K562 (cell line): ENCODE measurements at regions of chr20 and their contacts with region 1.

Region 1: DNA sequence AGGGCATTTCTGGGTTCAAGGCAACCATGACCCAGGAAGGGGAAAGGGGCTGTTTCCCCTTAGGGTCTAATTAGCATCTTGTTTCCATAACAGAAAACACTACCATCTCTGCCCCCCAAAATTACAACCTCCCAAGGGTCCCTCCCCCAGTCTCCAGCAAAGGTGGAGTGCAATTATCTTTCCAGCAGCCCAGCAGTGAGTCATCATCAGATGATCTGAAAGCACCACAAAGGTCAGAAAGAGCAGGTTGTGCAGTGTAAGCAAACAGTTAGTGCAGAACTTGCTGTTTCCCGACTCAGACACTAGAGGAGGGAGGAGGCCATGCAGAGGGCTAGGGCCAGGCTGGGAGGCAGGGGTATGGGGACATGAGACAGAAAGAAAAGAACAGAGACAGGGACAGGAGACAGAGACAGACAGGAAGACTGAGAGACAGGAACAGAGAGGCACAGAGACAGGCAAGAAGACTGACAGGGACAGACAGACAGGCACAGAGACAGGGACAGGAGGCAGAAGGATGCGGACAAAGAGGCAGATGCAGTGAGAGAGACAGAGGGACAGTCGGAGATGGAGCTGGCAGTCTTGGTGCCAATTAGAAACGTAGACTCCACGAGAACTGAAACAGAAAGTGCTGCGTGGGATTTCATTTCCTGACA is 62.5 kb downstream of the PYGB start:
- DNase-seq: peak; percentile 61 to 88 (median 70)
- ATAC-seq: peak; percentile 98
- H3K4me3 ChIP-seq: peak overlapping the region; percentile 6; the same call in 1 of the 2 replicates
- H3K27ac ChIP-seq: peak overlapping the region; percentile 74
- H3K4me1 ChIP-seq: peaks cover 32 to 41% of the 10 kb centered on the region in 2 experiments
- H3K27me3 ChIP-seq: no peaks in the 10 kb centered on the region
- CTCF ChIP-seq: peak; percentile 72 to 75 (median 74)
- EP300 ChIP-seq: peak; percentile 80
- POLR2A ChIP-seq: no peak
- RAD21 ChIP-seq: peak; percentile 78 to 84

Region 2: GRCh38 chr20:25390538-25391528 is 80.4 kb after region 1 on chr20 and contains the start of gene ABHD12:
- CTCF ChIA-PET with region 1: no interaction called
- POLR2A ChIA-PET with region 1: interaction called, 7 read pairs
- in situ Hi-C with region 1: no loop called
- intact Hi-C with region 1: loop called (anchors 2 kb)
- DNase-seq: peak; percentile 92 to 95 (median 93)
- ATAC-seq: peak; percentile 96
- H3K4me3 ChIP-seq: peak within 1 kb of the TSS; percentile 62
- H3K27ac ChIP-seq: peak within 1 kb of the TSS; percentile 78
- H3K4me1 ChIP-seq: peaks cover 0 to 10% of the 10 kb centered on the region in 2 experiments; a peak in 3 of 5 replicates
- H3K27me3 ChIP-seq: no peaks in the 10 kb centered on the region
- CTCF ChIP-seq: no peak
- EP300 ChIP-seq: no peak
- POLR2A ChIP-seq: peak; percentile 80
- RAD21 ChIP-seq: no peak
- polyA plus RNA-seq, gene ABHD12: 0.65 to 1.2 TPM